ENCODE measurements at regions of chr3 and their contacts with region 1.

Region 1: GRCh38 chr3:10055097-10055496 is 28.9 kb downstream of the FANCD2 start:
- DNase-seq: no peak
- H3K4me3 ChIP-seq: no peak overlapping the region
- CTCF ChIP-seq: no peak

Region 2: GRCh38 chr3:10248184-10249080 is 193.3 kb after region 1 on chr3 and contains the start of gene TATDN2:
- in situ Hi-C with region 1: loop called (anchors 10 kb)
- DNase-seq: peak; percentile 87
- H3K4me3 ChIP-seq: peak within 1 kb of the TSS; percentile 57
- CTCF ChIP-seq: no peak

Measured in astrocyte of the cerebellum (primary cell).